Aorta (tissue), 5 donors: ENCODE measurements at regions of chr15 and their contacts with region 1.

Region 1: DNA sequence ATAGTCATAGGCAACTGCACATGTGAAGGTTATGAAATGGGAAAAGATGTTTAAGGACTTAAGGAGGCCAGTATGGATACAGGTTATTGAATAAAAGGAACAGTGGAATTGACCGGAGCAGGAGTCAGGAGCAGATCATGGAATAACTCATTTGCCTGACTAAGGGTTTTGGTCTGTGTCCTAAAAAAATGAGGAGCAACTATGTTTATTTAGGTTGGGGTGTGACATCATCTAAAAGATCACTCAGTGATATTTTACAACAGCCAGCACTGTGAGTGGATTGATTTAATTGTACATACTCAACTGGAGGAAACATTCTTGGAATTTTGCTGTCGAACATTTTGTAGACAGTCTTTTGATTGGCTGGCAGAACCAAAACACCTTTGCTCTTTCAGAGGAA is 348.7 kb upstream of the CDIN1 start:
- DNase-seq: no peak
- ATAC-seq: no peak
- H3K4me3 ChIP-seq: no peak overlapping the region
- H3K27ac ChIP-seq: no peak overlapping the region
- H3K4me1 ChIP-seq: no peaks in the 10 kb centered on the region
- H3K27me3 ChIP-seq: no peaks in the 10 kb centered on the region

Region 2: DNA sequence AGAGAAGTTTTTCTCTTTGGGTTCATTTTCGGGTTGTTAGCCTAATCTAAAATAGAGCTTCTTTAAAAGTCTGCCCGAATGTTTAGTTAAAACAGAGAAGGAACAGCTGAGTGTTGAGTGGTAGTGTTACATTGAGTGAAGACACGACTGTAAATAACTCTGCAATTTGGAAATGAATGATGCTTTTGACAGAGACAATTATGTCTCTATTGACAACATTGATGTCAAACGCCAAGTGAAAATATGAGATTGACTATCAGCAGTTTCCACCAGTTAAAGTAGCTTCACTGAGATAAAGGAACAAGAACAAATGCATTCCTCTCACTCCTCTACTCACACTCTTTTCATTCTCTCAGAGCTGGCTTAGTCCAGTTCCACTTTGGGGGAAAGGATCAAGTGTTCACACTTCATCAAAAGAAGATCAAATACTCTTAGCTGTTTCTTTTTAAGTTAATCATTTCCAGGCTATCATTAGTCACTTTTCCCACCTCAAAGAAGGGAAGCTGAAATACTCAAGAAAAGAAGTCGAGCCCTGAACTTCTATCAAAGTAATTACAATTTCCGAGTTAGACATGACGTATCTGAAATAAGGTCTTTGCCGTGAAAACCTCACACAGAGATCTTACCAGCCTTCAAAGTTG is 285.7 kb before region 1 on chr15:
- intact Hi-C with region 1: no loop called
- DNase-seq: no peak
- ATAC-seq: no peak
- H3K4me3 ChIP-seq: no peak overlapping the region
- H3K27ac ChIP-seq: no peak overlapping the region
- H3K4me1 ChIP-seq: no peaks in the 10 kb centered on the region
- H3K27me3 ChIP-seq: no peaks in the 10 kb centered on the region

Region 3: GRCh38 chr15:36278219-36278618 is 47.5 kb after region 1 on chr15:
- intact Hi-C with region 1: loop called in 1 of 2 experiments (anchors 2 kb)
- DNase-seq: no peak
- ATAC-seq: no peak
- H3K4me3 ChIP-seq: no peak overlapping the region
- H3K27ac ChIP-seq: no peak overlapping the region
- H3K4me1 ChIP-seq: no peaks in the 10 kb centered on the region
- H3K27me3 ChIP-seq: no peaks in the 10 kb centered on the region